ENCODE measurements at regions of chr7 and their contacts with region 1.

Region 1: GRCh38 chr7:100889761-100890634 is 483 bp upstream of the UFSP1 start:
- DNase-seq: peak; percentile 84
- ATAC-seq: peak; percentile 87
- H3K4me3 ChIP-seq: peak overlapping the region; percentile 63 to 75 (median 75)
- H3K27ac ChIP-seq: peak overlapping the region; percentile 52
- H3K4me1 ChIP-seq: peaks cover 61% of the 10 kb centered on the region
- H3K27me3 ChIP-seq: peaks cover 6 to 16% of the 10 kb centered on the region in 2 experiments; a peak in 4 of 5 replicates
- CTCF ChIP-seq: no peak
- EP300 ChIP-seq: no peak
- POLR2A ChIP-seq: no peak
- RAD21 ChIP-seq: no peak

Region 2: DNA sequence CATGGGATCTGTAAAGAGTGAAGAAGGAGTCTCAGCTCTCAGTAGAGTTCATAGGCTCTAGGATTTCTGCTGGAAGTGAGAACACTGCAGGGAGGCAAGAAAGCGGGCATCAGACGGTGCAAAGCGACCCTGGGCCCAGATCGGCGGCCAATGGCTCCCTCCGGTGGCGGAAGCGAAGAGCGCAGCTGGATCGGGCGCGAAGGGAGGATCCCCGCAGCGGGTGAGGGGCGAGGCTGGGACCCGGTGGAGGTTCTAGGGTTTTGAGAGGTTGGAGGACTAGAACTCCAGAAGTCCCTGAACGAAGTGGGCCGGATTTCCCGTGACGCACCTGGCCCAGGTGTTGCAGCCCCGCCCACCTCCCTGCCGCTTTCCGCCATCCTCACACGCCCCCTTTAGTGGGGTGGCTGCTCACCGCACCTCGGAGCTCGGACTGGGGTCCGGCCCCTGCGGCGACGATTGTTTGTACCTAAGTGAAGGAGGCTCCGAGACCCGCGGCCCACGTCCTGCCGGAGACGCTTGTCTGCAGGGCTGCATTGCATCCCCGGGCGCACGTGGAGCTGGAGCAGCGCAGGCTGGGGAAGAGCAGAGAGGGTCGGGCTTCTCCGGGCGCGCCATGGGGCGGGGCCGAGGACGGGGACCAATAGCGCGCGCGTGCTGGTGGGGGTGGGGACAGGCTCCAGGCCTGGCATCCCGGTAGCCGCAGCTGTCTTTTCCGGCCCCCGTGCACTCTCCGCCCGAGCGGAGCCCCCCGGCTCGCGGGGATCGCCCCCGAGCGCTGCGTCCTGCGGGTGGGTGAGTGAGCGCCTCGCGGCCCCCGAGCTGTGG is 37.7 kb before region 1 on chr7 and contains the start of gene SLC12A9:
- CTCF ChIA-PET with region 1: no interaction called
- POLR2A ChIA-PET with region 1: interaction called, 13 read pairs
- in situ Hi-C with region 1: no loop called
- intact Hi-C with region 1: no loop called
- DNase-seq: peak; percentile 73
- ATAC-seq: peak; percentile 99
- H3K4me3 ChIP-seq: peak within 1 kb of the TSS; percentile 62 to 87 (median 85)
- H3K27ac ChIP-seq: no peak within 1 kb of the TSS
- H3K4me1 ChIP-seq: peaks cover 23% of the 10 kb centered on the region
- H3K27me3 ChIP-seq: no peaks in the 10 kb centered on the region; a peak in 1 of 5 replicates
- CTCF ChIP-seq: peak; percentile 97
- EP300 ChIP-seq: no peak
- POLR2A ChIP-seq: peak in 1 of 2 experiments; percentile 59; a peak in 2 of 4 replicates
- RAD21 ChIP-seq: peak; percentile 97
- total RNA-seq, gene SLC12A9: 5.4 and 16.6 TPM in 2 replicates

Region 3: GRCh38 chr7:100879685-100880261 is 10.2 kb before region 1 on chr7:
- CTCF ChIA-PET with region 1: no interaction called
- POLR2A ChIA-PET with region 1: interaction called, 141 read pairs
- in situ Hi-C with region 1: no loop called
- intact Hi-C with region 1: no loop called
- DNase-seq: no peak
- ATAC-seq: no peak
- H3K4me3 ChIP-seq: no peak overlapping the region
- H3K27ac ChIP-seq: no peak overlapping the region
- H3K4me1 ChIP-seq: peaks cover 49% of the 10 kb centered on the region
- H3K27me3 ChIP-seq: peaks cover 0 to 2% of the 10 kb centered on the region in 2 experiments; a peak in 1 of 5 replicates
- CTCF ChIP-seq: no peak
- EP300 ChIP-seq: no peak
- POLR2A ChIP-seq: no peak
- RAD21 ChIP-seq: no peak

Region 4: GRCh38 chr7:101077303-101078089 is 187.5 kb after region 1 on chr7:
- CTCF ChIA-PET with region 1: interaction called, 6 read pairs
- POLR2A ChIA-PET with region 1: no interaction called
- in situ Hi-C with region 1: no loop called
- intact Hi-C with region 1: loop called (anchors 5 kb)
- DNase-seq: peak; percentile 48
- ATAC-seq: peak; percentile 99
- H3K4me3 ChIP-seq: no peak overlapping the region
- H3K27ac ChIP-seq: no peak overlapping the region
- H3K4me1 ChIP-seq: peaks cover 16% of the 10 kb centered on the region
- H3K27me3 ChIP-seq: 0 out of 5 replicates have a peak, but pooled peaks cover 0 to 3% of the 10 kb centered on the region in 2 experiments
- CTCF ChIP-seq: peak; percentile 94
- EP300 ChIP-seq: no peak
- POLR2A ChIP-seq: no peak
- RAD21 ChIP-seq: peak; percentile 78